Gastrocnemius medialis (tissue), 4 donors: ENCODE measurements at regions of chr3 and their contacts with region 1.

Region 1: GRCh38 chr3:184298759-184299496 is at the start of gene PSMD2:
- DNase-seq: peak; percentile 97
- ATAC-seq: peak; percentile 93 to 96
- H3K4me3 ChIP-seq: peak within 1 kb of the TSS; percentile 70 to 93 (median 76)
- H3K27ac ChIP-seq: peak within 1 kb of the TSS; percentile 81 to 93 (median 86)
- H3K4me1 ChIP-seq: peaks cover 14 to 18% of the 10 kb centered on the region in 2 donors
- H3K27me3 ChIP-seq: no peaks in the 10 kb centered on the region
- CTCF ChIP-seq: peak in 1 of 5 experiments; percentile 18
- POLR2A ChIP-seq: peak; percentile 94 to 98
- total RNA-seq, gene PSMD2: 560 to 831 (median 720) TPM

Region 2: DNA sequence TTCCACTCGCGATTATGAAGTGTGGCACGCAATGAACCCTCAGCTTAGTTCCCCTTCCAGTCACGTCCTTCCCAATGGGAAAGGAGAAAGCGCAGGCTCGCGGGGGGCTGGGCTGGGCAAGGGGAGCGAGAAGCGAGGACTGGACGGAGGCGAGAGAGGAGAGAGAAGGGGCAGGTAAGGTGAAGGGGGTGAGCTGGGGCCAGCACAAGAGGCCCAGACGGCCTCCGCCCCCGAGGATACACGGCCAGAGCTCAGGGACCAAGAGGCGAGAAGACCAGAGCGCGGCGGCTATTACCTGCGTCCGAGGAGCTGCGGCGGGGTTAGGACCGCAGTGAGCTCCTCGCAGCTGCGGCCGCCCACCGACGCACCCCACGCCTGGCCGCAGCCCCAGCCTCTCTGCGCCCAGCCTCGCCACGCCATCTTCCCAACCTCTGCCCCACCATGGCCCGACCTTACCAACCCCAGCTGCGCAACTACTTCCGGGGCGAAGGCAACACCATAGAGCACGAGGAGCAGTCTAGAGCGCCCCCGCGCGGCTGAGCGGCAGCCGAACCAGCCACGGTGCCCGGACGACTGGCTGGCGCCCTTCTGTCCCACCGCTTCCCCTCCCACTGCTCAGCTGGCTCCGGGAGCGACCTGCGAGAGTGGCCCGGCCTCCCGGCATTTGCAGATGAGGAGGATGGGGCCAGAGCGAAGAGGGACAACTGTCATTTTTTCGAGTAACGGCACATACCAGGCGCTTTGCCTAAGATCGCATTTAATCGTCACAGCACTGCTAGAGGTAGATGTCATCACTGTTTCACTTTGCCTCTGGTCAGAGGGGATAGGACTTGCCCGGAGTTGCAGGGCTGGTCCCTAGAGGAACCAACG is 414.3 kb before region 1 on chr3 and contains the start of gene PARL:
- in situ Hi-C with region 1: loop called in 1 of 4 experiments (anchors 25 kb)
- intact Hi-C with region 1: loop called (anchors 2 kb)
- DNase-seq: peak; percentile 93 to 94
- ATAC-seq: peak; percentile 98 to 99
- H3K4me3 ChIP-seq: peak within 1 kb of the TSS; percentile 83 to 96 (median 92)
- H3K27ac ChIP-seq: peak within 1 kb of the TSS; percentile 77 to 90 (median 88)
- H3K4me1 ChIP-seq: peaks cover 20 to 23% of the 10 kb centered on the region in 2 donors
- H3K27me3 ChIP-seq: no peaks in the 10 kb centered on the region
- CTCF ChIP-seq: peak; percentile 93 to 96 (median 96)
- POLR2A ChIP-seq: peak; percentile 43 to 72
- total RNA-seq, gene PARL: 30.5 to 49.5 (median 41.3) TPM

Region 3: GRCh38 chr3:184143327-184143726 is 155.6 kb before region 1 on chr3:
- in situ Hi-C with region 1: no loop called
- intact Hi-C with region 1: no loop called
- DNase-seq: no peak
- ATAC-seq: no peak
- H3K4me3 ChIP-seq: no peak overlapping the region
- H3K27ac ChIP-seq: no peak overlapping the region
- H3K4me1 ChIP-seq: peaks cover 23 to 33% of the 10 kb centered on the region in 2 donors
- H3K27me3 ChIP-seq: no peaks in the 10 kb centered on the region
- CTCF ChIP-seq: no peak
- POLR2A ChIP-seq: no peak

Region 4: DNA sequence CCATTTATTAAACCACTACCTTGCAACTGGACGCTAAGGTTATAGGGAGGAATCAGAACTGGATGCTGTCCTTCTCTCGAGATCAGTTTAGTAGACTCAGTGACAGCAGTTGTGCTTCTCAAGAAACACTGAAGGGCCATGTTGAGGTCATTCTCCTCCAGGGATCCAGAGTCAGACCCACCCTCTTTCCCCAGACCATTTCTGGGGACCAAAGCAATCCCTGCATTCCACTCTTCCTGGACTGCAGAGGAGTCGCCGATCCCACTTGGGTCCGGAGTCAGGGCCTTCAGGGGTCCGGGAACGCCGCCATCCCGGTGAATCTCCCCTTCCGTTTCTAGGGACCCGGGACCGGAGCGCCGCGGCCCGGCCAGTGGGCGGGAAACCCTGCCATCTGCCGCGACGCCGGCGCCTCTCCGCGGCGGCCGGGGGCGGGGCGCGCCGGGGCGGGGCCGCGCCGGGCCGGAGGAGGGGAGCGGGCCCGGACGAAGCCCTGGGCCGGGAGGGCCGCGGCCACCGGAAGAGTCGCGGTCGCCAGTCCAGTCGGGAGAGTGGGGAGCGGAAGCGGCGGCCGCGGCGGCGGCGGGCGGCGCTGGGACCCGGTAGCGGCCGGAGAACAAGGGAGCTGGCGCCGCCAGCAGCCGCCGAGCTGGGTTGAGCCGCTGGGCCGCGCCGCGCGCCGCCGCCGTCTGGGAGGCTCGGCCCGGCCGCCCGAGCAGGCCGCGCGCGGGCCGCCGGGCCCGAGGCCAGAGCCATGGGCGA is 143.9 kb before region 1 on chr3 and contains the start of gene DVL3:
- in situ Hi-C with region 1: no loop called
- intact Hi-C with region 1: loop called (anchors 5 kb)
- DNase-seq: peak; percentile 51 to 71
- ATAC-seq: peak; percentile 84 to 90
- H3K4me3 ChIP-seq: peak within 1 kb of the TSS; percentile 83 to 99 (median 94)
- H3K27ac ChIP-seq: peak within 1 kb of the TSS; percentile 89 to 97 (median 94)
- H3K4me1 ChIP-seq: peaks cover 42 to 53% of the 10 kb centered on the region in 2 donors
- H3K27me3 ChIP-seq: no peaks in the 10 kb centered on the region
- CTCF ChIP-seq: no peak
- POLR2A ChIP-seq: peak; percentile 52 to 78
- total RNA-seq, gene DVL3: 36.5 to 58.1 (median 48.0) TPM

Region 5: GRCh38 chr3:184185461-184186308 is 113.2 kb before region 1 on chr3 and contains the start of gene ABCF3:
- in situ Hi-C with region 1: no loop called
- intact Hi-C with region 1: loop called (anchors 5 kb)
- DNase-seq: peak; percentile 99
- ATAC-seq: peak; percentile 92 to 97
- H3K4me3 ChIP-seq: peak within 1 kb of the TSS; percentile 78 to 97 (median 90)
- H3K27ac ChIP-seq: peak within 1 kb of the TSS; percentile 89 to 97 (median 96)
- H3K4me1 ChIP-seq: peaks cover 18 to 21% of the 10 kb centered on the region in 2 donors
- H3K27me3 ChIP-seq: no peaks in the 10 kb centered on the region
- CTCF ChIP-seq: no peak
- POLR2A ChIP-seq: peak; percentile 73 to 91
- total RNA-seq, gene ABCF3: 52.6 to 96.4 (median 63.2) TPM

Region 6: DNA sequence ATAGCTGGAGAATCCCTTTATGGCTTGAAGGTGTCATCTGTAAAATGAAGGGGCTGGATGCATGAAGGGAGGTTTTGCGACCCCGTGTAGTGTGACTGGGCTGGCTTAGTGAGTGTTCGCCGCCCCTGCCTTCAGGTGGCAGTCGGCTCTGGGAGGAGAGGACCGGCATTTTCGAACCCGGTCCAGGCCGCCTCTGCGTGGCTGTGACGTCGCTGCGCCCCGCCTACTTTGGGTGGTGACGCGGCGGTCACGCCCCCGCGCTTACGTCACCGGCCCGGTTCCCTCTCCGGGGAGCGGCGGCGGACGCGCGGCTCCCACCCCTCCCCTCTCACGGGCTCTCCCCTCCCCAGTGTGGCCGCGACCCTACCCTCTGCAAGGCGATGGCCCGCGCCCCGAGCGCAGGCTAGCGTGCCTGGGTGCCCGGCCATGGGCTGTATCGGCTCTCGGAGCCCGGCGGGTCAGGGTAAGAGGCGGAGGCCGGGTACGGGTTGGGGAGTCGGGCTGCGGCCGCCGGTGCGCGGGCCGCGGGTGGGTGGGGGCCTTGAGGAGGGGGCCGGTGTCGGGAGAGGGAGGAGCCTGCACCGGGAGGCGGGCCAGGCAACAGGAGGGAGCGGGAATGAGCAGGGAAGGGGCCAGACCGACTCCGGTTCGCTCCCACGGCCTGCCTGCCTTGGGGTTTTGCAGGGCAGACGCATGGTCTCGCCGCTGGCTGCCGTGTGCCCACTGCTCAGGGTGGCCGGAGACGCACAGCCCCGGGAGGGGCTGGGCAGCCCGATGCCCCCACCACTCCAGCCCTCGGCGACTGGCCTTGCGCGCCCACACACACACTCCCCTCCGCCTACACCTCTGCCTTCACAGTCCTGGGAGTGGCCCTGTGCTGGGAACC is 37.0 kb after region 1 on chr3:
- in situ Hi-C with region 1: no loop called
- intact Hi-C with region 1: loop called (anchors 2 kb)
- DNase-seq: peak; percentile 69 to 79
- ATAC-seq: peak; percentile 53 to 60
- H3K4me3 ChIP-seq: peak overlapping the region; percentile 75 to 90 (median 82)
- H3K27ac ChIP-seq: peak overlapping the region; percentile 98 to 99 (median 98)
- H3K4me1 ChIP-seq: peaks cover 38 to 47% of the 10 kb centered on the region in 2 donors
- H3K27me3 ChIP-seq: no peaks in the 10 kb centered on the region
- CTCF ChIP-seq: no peak
- POLR2A ChIP-seq: peak; percentile 92 to 93

Region 7: GRCh38 chr3:184399410-184399809 is 100.5 kb after region 1 on chr3:
- in situ Hi-C with region 1: no loop called
- intact Hi-C with region 1: no loop called
- DNase-seq: no peak
- ATAC-seq: peak in 1 of 2 donors; percentile 41
- H3K4me3 ChIP-seq: no peak overlapping the region
- H3K27ac ChIP-seq: no peak overlapping the region
- H3K4me1 ChIP-seq: no peaks in the 10 kb centered on the region
- H3K27me3 ChIP-seq: peaks cover 0 to 10% (median 0%) of the 10 kb centered on the region in 3 donors
- CTCF ChIP-seq: no peak
- POLR2A ChIP-seq: no peak